K562 (cell line): ENCODE measurements at regions of chrX and their contacts with region 1.

Region 1: DNA sequence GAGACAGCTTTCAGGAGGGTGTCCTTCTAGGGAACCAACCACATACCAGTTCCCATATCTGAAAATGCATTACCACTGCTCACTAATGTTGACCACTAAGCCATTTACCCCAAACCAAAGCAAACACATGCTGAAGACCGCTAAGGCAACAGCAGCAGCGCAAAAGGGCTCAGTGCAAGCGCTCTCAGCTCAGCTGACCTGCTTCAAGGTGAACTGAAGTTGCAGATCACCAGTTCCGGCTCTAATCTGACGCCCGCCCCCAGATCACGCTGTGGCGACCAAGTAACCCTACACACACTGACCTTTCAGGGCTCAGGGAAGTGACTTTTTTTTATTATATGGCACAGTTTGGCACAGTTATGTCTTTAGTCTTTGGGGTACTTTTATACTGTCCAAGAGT is 5.8 kb downstream of the MECP2 start:
- DNase-seq: peak in 2 of 4 experiments; percentile 56 to 80
- ATAC-seq: peak; percentile 78
- H3K4me3 ChIP-seq: no peak overlapping the region
- H3K27ac ChIP-seq: peak overlapping the region; percentile 82
- H3K4me1 ChIP-seq: peaks cover 13 to 33% of the 10 kb centered on the region in 2 experiments; a peak in 4 of 5 replicates
- H3K27me3 ChIP-seq: no peaks in the 10 kb centered on the region
- CTCF ChIP-seq: no peak
- EP300 ChIP-seq: no peak
- POLR2A ChIP-seq: no peak
- RAD21 ChIP-seq: no peak

Region 2: DNA sequence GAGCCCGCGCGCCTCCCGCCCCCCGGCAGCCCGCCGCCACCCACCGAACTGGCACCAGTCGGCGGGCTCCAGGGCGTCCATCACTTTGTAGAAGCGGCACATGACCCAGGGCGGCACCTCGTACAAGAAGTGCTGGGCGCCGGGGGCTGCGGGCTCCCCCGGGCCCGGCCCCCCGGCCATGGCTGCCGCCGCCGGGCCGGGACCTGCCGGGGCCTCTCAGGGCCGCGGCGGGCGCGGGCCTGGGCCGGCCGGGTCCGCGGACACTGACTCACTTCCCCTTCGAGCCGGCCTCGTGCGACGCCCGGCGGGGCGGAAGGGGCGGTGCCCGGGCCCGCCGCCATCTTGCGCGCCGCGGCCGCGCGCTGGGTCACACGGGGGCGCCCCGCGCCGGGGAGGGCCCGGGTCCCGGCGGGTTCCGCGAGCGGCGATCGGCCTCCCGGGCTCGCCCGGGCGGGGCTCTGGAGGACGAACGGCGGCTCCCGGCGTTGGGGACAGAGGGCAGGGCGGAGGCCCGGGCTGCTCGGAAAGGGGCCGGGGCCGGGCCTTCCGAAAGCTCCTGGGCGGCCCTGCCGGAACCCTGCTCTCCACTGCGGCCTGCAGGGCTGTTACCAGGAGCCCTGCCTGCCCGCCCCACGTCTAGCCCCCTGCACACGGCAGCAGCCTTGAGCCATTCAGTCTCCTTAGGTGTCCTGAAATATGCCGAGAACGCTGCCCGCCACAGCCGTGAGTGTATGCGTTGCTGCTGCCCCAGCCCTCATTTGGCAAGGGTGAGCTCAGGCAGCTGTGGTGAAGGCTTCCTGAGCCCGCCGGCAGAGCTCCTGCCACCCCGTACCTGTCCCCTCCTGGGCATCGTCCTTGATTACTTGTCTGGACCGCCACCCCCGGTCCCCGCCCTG is 71.8 kb before region 1 on chrX and contains the start of gene IRAK1:
- CTCF ChIA-PET with region 1: no interaction called
- POLR2A ChIA-PET with region 1: no interaction called
- in situ Hi-C with region 1: no loop called
- intact Hi-C with region 1: loop called (anchors 5 kb)
- DNase-seq: peak; percentile 82 to 86 (median 86)
- ATAC-seq: peak; percentile 74
- H3K4me3 ChIP-seq: peak within 1 kb of the TSS; percentile 81
- H3K27ac ChIP-seq: peak within 1 kb of the TSS; percentile 93
- H3K4me1 ChIP-seq: peaks cover 21 to 83% of the 10 kb centered on the region in 2 experiments
- H3K27me3 ChIP-seq: no peaks in the 10 kb centered on the region
- CTCF ChIP-seq: no peak
- EP300 ChIP-seq: no peak
- POLR2A ChIP-seq: peak; percentile 53
- RAD21 ChIP-seq: peak in 1 of 2 experiments; percentile 30; a peak in 2 of 4 replicates
- polyA plus RNA-seq, gene IRAK1: 11.6 to 16.1 TPM

Region 3: DNA sequence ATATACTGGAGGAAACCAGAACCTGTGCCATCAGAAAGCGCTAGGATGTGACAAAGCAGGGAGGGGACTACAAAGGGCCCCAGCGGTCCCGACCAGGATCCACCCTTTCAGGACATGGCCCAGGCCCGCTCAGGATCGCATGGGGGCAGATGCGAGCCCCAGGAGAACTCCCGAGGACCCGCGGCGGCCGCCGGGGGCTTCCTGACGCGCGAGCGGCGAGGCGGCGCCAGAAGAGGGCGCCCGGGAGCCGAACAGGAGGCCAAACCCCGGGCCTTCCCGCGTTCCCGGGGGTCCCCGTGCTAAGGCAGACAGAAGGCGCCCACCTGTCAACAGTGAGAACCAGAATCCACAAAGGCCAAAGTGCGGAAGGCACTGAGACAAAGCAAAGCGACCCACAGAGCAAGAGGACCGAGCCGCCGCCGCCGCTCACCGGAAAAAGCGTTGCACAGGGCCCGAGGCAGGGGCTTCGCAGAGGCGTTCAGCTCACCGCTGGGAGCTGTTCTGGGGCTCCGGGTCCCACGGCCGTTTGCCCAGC is 45.0 kb after region 1 on chrX:
- CTCF ChIA-PET with region 1: no interaction called
- POLR2A ChIA-PET with region 1: no interaction called
- in situ Hi-C with region 1: no loop called
- intact Hi-C with region 1: loop called (anchors 2 kb)
- DNase-seq: peak; percentile 81 to 84 (median 82)
- ATAC-seq: peak; percentile 97
- H3K4me3 ChIP-seq: no peak overlapping the region
- H3K27ac ChIP-seq: no peak overlapping the region
- H3K4me1 ChIP-seq: peaks cover 0 to 12% of the 10 kb centered on the region in 2 experiments; a peak in 3 of 5 replicates
- H3K27me3 ChIP-seq: no peaks in the 10 kb centered on the region
- CTCF ChIP-seq: peak; percentile 80 to 97 (median 81)
- EP300 ChIP-seq: no peak
- POLR2A ChIP-seq: no peak
- RAD21 ChIP-seq: peak; percentile 71 to 81